GM13976 (cell line): ENCODE measurements at regions of chr17 and their contacts with region 1.

Region 1: GRCh38 chr17:79393358-79394202 is 217.3 kb downstream of the RBFOX3 start:
- DNase-seq: peak; percentile 88
- CTCF ChIP-seq: peak; percentile 95

Region 2: DNA sequence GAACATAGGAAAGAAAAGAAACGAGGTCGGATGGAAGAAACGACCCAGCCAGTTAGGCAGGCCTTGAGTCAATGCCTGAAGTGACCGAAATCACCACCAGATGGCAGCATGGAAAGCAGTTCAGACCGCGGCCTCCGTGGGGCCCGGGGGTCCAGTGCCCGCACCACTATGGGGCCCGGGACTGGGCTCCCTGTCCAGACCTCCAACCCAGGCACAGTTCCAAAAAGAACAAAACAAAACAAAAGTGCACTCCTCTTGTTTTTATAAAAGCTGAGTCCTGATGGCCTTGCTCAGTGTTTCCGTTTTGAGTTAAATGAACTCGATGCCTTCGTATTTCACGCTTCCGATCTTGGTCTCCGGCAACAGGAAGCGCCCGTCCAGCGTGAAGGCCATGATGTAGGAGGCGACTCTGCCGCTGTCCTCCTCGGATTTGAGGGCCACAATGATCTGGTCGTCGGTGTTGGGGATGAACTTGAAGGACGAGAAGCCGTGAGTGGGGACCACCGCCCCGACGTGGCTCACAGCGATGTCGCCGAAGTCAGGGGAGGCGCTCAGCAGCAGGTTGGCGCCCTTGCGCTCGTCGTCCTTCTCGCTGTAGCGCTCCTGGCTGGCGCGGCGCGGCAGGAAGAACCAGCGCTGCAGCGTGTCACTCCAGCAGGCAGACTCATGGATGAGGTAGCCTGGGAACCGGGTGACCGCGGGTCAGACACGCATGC is 400.2 kb before region 1 on chr17:
- in situ Hi-C with region 1: no loop called
- DNase-seq: peak; percentile 74
- CTCF ChIP-seq: peak; percentile 65

Region 3: GRCh38 chr17:79087428-79088143 is 306.0 kb before region 1 on chr17:
- in situ Hi-C with region 1: loop called (anchors 10 kb)
- DNase-seq: peak; percentile 91
- CTCF ChIP-seq: peak; percentile 94

Region 4: DNA sequence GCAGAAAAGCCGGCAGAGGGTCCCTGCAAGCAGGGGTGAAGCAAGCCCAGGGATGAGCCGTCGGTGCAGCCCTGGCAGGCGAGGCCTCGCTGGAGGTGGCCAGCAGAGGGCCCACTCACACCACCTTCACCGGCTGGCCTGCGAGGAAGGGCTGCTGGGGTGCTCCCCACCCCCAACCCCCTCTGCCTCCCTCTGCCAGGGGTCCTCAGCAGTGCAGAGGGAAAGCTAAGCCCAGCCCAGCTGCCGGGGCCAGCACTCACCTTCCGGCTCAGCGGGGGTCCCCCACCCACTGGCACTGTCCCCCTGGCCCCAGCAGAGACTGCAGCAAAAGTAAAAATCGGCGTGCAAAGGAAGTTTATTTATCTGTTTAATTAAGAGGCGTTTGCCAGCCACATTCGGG is 205.5 kb before region 1 on chr17:
- in situ Hi-C with region 1: loop called (anchors 10 kb)
- DNase-seq: peak; percentile 80
- CTCF ChIP-seq: peak; percentile 61

Region 5: DNA sequence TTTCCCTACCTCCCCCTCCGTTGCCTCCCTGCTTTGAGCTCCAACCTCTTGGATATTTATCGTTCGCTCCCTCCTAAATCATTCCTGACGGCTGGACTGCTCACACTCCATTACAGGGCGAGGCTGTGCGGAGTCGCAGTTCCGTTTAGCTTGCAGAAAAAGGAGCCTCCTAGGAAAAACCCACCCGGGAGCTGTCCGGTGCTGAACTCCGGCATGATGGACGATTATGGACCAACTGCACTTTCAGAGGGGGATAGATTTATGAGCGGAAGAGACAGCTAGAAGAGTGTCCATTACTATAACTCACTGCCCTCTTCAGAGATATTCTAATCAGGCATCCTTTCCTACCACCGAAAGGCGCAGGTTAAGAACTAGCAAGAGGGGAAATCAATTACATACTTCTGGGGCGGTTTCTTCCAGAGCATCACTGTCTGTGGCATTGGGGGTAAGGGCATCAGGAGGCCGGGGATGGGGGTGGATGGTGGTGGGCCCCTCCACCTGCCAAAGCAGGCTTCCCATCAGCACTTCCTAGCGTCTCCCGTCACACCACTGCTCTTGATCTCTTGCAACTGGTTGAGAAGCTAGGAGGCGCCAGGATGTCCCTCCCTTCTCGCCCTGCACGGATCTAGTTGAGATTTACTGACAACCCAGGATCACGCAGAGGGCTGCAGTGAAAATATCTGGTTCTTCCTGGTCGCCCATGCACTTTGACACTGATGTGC is 67.7 kb before region 1 on chr17:
- in situ Hi-C with region 1: no loop called
- DNase-seq: no peak
- CTCF ChIP-seq: no peak